ENCODE measurements at regions of chr2 and their contacts with region 1.

Region 1: GRCh38 chr2:108448678-108449493 is at the start of gene GCC2:
- DNase-seq: peak; percentile 96 to 97 (median 96)
- H3K4me3 ChIP-seq: peak within 1 kb of the TSS; percentile 83 to 100
- H3K4me3 Mint-ChIP-seq: peak within 1 kb of the TSS; percentile 95 to 100 (median 98)
- H3K27ac ChIP-seq: peak within 1 kb of the TSS; percentile 97
- H3K27ac Mint-ChIP-seq: peak within 1 kb of the TSS; percentile 98 to 100 (median 99)
- H3K4me1 ChIP-seq: peaks cover 32% of the 10 kb centered on the region
- H3K4me1 Mint-ChIP-seq: peaks cover 20 to 50% (median 34%) of the 10 kb centered on the region in 4 donors
- H3K27me3 ChIP-seq: no peaks in the 10 kb centered on the region
- H3K27me3 Mint-ChIP-seq: no peaks in the 10 kb centered on the region
- total RNA-seq, gene GCC2: 209 to 232 TPM

Region 2: DNA sequence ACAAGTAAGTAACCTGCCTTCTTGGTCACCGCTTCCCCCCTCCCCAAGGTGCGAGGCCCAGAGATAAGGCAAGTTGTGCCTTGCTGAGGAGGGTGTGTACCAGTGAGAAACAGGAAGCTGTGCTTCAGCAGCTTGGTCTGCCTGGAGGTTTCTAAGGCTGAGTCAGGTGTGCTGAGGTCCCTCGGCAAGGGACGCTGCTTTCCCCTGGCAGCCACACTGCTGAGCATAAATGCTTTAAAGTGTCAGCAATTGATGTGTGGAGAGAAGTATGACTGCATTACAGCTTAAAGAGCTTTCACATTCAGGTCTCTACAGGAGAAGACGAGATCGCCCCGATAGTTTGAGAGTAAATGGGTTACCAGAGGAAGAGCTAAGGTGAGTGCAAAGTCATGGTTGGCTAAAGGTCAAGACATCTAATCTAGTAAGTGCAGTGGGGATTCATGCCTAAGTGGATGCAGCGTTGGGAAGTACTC is 172.2 kb after region 1 on chr2:
- CTCF ChIA-PET with region 1: no interaction called
- POLR2A ChIA-PET with region 1: interaction called, 4 read pairs
- intact Hi-C with region 1: loop called (anchors 5 kb)
- DNase-seq: peak; percentile 79 to 92 (median 84)
- H3K4me3 ChIP-seq: peak overlapping the region; percentile 65 to 86
- H3K4me3 Mint-ChIP-seq: peak overlapping the region; percentile 91 to 97 (median 92)
- H3K27ac ChIP-seq: peak overlapping the region; percentile 69
- H3K27ac Mint-ChIP-seq: peak overlapping the region; percentile 91 to 98 (median 96)
- H3K4me1 ChIP-seq: peaks cover 88% of the 10 kb centered on the region
- H3K4me1 Mint-ChIP-seq: peaks cover 52 to 86% (median 66%) of the 10 kb centered on the region in 4 donors
- H3K27me3 ChIP-seq: no peaks in the 10 kb centered on the region
- H3K27me3 Mint-ChIP-seq: no peaks in the 10 kb centered on the region

Measured in CD4-positive, alpha-beta memory T cell (primary cell).